ENCODE measurements at regions of chr17 and their contacts with region 1.

Region 1: DNA sequence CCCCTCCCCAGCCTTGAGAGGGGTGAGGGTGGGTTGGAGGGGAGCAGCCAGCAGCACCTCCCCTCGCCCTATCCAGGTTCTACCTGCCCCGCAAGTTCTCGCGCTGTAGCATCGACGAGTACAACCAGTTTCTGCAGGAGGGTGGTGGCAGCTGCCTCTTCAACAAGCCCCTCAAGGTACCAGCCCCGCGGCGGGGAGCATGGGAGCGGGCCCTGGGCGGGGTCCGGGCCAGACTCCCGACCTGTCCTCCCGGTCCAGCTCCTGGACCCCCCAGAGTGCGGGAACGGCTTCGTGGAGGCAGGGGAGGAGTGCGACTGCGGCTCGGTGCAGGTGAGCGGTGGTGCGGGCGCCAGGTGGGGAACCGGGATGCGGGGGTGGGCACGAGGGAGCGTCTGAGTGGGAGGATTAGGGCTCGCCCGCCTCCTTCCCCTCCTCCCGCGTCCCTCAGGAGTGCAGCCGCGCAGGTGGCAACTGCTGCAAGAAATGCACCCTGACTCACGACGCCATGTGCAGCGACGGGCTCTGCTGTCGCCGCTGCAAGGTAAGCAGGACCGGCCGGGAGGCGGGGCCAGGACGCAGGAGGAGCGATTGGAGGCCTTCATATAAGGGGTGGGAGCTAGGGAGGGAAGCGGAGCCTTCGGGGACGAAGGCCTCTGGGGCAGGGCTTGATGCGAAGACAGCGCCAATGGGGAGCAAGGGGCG is 16.5 kb downstream of the ADAM11 start:
- DNase-seq: peak; percentile 99
- ATAC-seq: peak; percentile 97
- H3K4me3 Mint-ChIP-seq: peak overlapping the region; percentile 76
- H3K27ac Mint-ChIP-seq: peak overlapping the region; percentile 62
- H3K4me1 Mint-ChIP-seq: peaks cover 14% of the 10 kb centered on the region
- H3K27me3 Mint-ChIP-seq: peaks cover 7% of the 10 kb centered on the region

Region 2: GRCh38 chr17:44786551-44787081 is 11.3 kb after region 1 on chr17:
- CTCF ChIA-PET with region 1: interaction called, 11 read pairs
- DNase-seq: no peak
- ATAC-seq: no peak
- H3K4me3 Mint-ChIP-seq: no peak overlapping the region
- H3K27ac Mint-ChIP-seq: no peak overlapping the region
- H3K4me1 Mint-ChIP-seq: no peaks in the 10 kb centered on the region
- H3K27me3 Mint-ChIP-seq: peaks cover 9% of the 10 kb centered on the region

Region 3: GRCh38 chr17:44829523-44830358 is 54.5 kb after region 1 on chr17 and contains the start of gene GJC1:
- CTCF ChIA-PET with region 1: interaction called, 21 read pairs
- DNase-seq: no peak
- ATAC-seq: peak; percentile 75
- H3K4me3 Mint-ChIP-seq: peak within 1 kb of the TSS; percentile 61
- H3K27ac Mint-ChIP-seq: no peak within 1 kb of the TSS
- H3K4me1 Mint-ChIP-seq: peaks cover 6% of the 10 kb centered on the region
- H3K27me3 Mint-ChIP-seq: peaks cover 66% of the 10 kb centered on the region
- total RNA-seq, gene GJC1: 2.7 to 3.7 TPM

Region 4: DNA sequence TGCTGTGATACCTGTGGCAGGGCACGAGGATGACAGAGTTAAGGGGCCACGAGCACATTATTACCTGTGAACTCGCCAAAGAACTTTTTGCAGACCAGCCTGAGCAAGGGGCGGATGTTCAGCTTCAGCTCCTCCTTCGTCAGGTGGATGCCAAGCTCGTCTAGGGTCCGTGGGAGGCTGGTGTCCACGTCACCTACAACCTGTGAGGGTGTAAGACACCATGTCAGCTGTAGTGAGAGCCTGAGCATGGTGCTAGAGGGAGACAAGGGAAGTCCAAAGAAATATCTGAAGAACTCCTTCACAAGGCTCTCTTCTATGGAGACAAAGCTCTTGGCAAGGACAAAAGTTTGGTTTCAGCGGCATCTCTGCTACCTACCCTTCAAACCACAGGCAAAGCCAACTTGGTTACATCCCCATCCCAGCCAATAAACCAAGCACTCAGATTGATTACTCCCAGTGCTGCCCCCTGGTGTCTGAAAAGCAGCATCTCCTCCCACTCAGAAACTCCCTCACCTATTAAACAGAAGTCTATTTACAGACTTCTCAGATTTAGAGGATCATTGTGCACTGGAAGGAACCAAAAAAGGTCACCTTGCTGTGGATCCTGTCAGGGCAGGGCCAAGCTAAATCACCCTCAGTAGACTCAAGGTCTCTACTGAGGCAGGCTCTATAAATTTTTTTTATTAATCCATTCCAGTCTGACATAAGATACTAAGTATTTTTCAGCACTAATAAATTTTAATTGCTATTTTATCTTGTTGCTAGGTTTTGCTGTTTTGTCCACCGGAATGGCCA is 89.8 kb after region 1 on chr17:
- CTCF ChIA-PET with region 1: interaction called, 186 read pairs
- DNase-seq: peak; percentile 77
- ATAC-seq: peak; percentile 81
- H3K4me3 Mint-ChIP-seq: no peak overlapping the region
- H3K27ac Mint-ChIP-seq: no peak overlapping the region
- H3K4me1 Mint-ChIP-seq: peaks cover 1% of the 10 kb centered on the region
- H3K27me3 Mint-ChIP-seq: no peaks in the 10 kb centered on the region

Region 5: DNA sequence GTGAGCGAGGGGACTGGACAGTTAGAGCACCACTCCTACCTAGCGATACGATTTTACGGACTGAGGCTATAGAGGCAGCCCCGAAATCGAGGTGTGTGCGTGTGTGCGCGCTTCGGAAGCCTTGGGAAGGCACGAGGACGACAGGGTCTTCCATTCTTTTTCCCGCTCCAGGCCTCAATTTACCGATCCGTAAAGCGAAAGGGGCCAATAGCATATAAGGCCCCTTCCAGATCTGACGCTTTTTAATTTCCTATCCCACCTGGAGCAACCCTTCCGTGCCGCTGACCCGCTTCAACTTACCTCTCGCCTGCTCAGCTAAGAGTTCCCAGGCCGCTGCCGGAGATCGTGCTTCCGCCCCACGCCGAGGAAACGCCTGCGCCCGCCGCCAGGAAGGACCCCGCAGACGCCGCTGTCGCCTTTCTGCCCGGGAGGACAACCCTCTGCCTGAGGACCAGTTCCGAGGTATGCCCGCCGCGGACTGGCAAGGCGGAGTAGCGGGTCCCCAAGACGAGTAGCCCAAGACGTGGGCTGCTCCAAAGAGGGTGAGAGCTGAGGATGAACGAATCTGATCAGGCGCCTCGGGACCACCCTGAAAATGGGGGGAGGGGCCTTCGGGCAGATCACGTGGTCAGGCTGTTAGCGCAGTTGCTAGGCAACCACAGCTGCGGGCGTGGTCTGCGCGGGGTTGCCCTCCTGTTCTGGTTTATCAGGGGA is 123.9 kb after region 1 on chr17 and contains the start of gene EFTUD2:
- CTCF ChIA-PET with region 1: interaction called, 11 read pairs
- DNase-seq: peak; percentile 94
- ATAC-seq: peak; percentile 97
- H3K4me3 Mint-ChIP-seq: peak within 1 kb of the TSS; percentile 85
- H3K27ac Mint-ChIP-seq: peak within 1 kb of the TSS; percentile 99
- H3K4me1 Mint-ChIP-seq: peaks cover 29% of the 10 kb centered on the region
- H3K27me3 Mint-ChIP-seq: peaks cover 8% of the 10 kb centered on the region
- total RNA-seq, gene EFTUD2: 134 to 178 TPM